Activated CD4-positive, alpha-beta memory T cell treated with anti-CD3 and anti-CD28 coated beads, Interleukin-2, amount 10 ng/mL, durations not matched to agents 7 days and 5 days (primary cell): ENCODE measurements at regions of chr10 and their contacts with region 1.

Region 1: DNA sequence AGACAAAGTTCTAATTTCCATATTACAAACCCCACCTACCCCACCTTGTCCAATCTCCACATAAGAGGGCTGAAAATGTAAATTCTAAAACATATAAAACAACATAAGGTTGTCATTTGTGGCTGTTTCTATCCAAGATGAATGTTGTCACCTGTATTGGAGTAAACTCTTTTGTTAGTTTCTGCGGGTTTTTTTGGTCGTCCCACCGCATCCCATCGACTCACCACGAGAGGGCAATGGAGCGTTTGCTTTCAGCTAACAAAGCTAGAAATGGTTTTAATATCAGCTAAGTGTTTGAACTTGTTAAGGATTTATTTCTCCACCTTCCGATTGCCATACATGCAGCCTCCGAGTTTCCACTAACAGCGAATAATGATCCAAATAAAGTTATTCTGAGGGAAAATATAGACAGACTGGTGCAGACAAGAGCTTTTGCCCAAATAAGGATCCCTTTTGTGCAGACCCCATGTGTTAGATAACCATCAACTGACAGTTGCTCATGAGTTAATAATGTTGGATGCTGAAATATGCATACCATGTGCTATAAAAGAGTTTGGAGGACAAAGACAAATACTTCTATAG is 137.2 kb downstream of the ARID5B start:
- DNase-seq: peak; percentile 83
- H3K4me3 Mint-ChIP-seq: peak overlapping the region; percentile 54
- H3K27ac Mint-ChIP-seq: peak overlapping the region; percentile 74
- H3K4me1 Mint-ChIP-seq: peaks cover 72% of the 10 kb centered on the region
- H3K27me3 Mint-ChIP-seq: no peaks in the 10 kb centered on the region

Region 2: GRCh38 chr10:61961278-61961677 is 77.4 kb before region 1 on chr10:
- CTCF ChIA-PET with region 1: no interaction called
- POLR2A ChIA-PET with region 1: interaction called, 11 read pairs
- DNase-seq: peak; percentile 59
- H3K4me3 Mint-ChIP-seq: peak overlapping the region; percentile 39
- H3K27ac Mint-ChIP-seq: peak overlapping the region; percentile 90
- H3K4me1 Mint-ChIP-seq: peaks cover 81% of the 10 kb centered on the region
- H3K27me3 Mint-ChIP-seq: no peaks in the 10 kb centered on the region

Region 3: DNA sequence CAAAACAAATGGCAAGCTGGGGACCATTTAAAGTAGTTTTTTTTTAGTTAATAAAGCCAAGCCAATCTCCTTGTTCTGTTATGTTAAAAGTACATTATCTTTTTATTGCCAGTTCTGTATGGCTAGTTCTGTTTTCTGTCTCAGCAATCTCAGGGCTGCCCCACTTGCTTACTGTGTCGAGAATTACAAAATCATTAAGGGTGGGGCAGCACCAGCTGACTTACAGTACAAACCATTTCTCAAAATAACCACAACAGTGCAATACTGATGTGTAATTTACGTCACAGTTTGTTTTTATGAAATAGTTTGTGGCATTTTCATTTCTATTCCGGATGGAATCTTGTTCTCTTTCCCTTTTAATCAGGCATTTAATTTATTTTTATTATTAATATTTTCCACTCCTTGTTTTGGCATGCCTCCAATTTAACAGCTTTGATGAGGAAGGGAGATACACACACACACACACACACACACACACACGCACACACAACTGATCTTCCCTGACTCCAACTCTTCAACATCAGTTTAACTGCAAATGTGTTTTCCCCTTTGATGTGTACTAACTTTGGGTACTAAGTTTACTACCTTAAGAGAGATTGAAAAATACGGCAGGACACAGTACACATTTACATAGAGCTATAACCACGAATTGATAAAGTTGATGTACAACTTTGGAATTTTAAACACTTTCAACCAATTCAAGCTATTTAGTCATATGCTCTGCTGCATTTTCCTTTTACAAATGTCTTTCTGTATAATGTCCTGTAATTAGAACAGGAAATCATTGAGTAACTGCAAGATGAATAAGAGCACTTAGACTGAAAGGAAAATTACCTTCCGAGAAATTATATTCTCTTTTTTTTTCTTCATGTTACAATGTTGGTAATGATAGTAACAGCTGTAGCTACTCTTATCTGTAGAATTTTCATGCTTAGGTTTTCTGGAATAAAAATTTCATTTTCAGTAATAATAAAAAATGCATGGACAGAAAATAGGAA is 45.7 kb before region 1 on chr10:
- CTCF ChIA-PET with region 1: interaction called, 15 read pairs
- POLR2A ChIA-PET with region 1: interaction called, 20 read pairs
- DNase-seq: peak; percentile 75
- H3K4me3 Mint-ChIP-seq: peak overlapping the region; percentile 69
- H3K27ac Mint-ChIP-seq: peak overlapping the region; percentile 91
- H3K4me1 Mint-ChIP-seq: peaks cover 76% of the 10 kb centered on the region
- H3K27me3 Mint-ChIP-seq: no peaks in the 10 kb centered on the region

Region 4: DNA sequence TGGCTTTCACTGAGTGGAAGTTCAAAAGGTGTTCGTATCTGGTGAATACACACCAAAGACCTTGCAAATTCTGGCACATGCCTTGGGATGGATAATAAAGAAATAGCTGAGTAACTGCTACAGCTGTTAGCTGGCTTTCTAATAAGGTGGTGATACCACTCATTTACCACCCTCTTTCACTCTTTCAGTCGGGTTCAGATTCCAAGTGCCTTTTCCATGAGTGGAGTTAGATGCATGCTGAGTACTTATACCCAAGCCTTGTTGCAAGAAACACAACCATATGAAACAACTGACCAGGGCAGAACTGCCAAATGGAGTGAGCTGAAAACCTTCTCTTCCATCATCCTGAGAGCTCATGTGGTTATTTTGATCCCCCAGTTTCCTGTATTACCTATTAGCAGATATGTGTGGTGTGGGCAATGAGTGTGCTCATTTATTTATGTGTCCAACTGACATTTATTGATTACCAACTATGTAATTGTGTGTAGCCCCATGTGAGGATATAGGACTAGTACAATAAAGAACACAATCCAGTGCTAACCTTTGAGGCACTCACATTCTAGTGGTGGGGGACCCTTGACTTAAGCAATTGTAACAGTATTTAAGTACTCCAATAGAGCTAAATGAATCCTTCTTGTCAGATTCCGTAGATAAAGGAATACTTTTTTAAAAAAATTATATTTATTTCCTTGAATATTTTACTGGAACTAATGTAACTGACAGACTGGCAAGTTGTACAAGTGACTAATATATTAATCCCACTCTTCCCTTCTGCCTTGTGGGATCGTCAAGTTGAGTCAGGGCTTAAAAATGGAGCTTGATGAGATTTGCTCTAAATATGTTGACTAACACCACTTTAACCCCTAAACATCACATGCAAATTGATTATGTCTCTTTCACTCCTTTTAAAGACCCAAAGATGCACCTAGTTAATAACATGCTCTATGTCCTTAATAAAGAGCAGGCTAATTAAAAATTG is 12.5 kb before region 1 on chr10:
- CTCF ChIA-PET with region 1: interaction called, 21 read pairs
- POLR2A ChIA-PET with region 1: interaction called, 15 read pairs
- DNase-seq: no peak
- H3K4me3 Mint-ChIP-seq: no peak overlapping the region
- H3K27ac Mint-ChIP-seq: no peak overlapping the region
- H3K4me1 Mint-ChIP-seq: peaks cover 78% of the 10 kb centered on the region
- H3K27me3 Mint-ChIP-seq: no peaks in the 10 kb centered on the region

Region 5: DNA sequence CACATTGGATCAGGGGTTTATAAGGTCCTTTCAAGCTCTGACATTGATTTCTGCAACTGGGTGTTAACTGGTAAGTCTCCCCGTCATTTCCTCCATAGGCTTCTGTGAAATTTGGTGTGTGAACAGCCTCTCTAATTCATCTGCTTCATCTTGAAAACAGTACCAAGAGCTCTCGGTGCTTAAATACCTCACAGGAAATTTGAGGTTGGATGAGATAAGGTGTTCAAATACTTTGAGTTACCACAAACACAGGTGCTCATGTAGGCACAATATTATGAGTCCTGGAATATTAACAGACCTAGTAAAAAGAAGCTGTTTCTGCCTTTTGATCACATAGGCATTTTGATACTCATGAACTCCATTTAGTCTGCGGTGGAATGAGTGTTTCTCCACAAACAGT is 144.7 kb after region 1 on chr10:
- CTCF ChIA-PET with region 1: interaction called, 7 read pairs
- POLR2A ChIA-PET with region 1: interaction called, 446 read pairs
- DNase-seq: peak; percentile 49
- H3K4me3 Mint-ChIP-seq: peak overlapping the region; percentile 9
- H3K27ac Mint-ChIP-seq: peak overlapping the region; percentile 91
- H3K4me1 Mint-ChIP-seq: peaks cover 84% of the 10 kb centered on the region
- H3K27me3 Mint-ChIP-seq: no peaks in the 10 kb centered on the region

Region 6: GRCh38 chr10:62264702-62265436 is 226.2 kb after region 1 on chr10:
- CTCF ChIA-PET with region 1: interaction called, 26 read pairs
- POLR2A ChIA-PET with region 1: interaction called, 3 read pairs
- DNase-seq: no peak
- H3K4me3 Mint-ChIP-seq: no peak overlapping the region
- H3K27ac Mint-ChIP-seq: no peak overlapping the region
- H3K4me1 Mint-ChIP-seq: peaks cover 27% of the 10 kb centered on the region
- H3K27me3 Mint-ChIP-seq: peaks cover 14% of the 10 kb centered on the region